GM10248 (cell line): ENCODE measurements at regions of chr6 and their contacts with region 1.

Region 1: GRCh38 chr6:34806738-34807453 is 15.0 kb downstream of the BLTP3A start:
- DNase-seq: no peak
- CTCF ChIP-seq: no peak

Region 2: DNA sequence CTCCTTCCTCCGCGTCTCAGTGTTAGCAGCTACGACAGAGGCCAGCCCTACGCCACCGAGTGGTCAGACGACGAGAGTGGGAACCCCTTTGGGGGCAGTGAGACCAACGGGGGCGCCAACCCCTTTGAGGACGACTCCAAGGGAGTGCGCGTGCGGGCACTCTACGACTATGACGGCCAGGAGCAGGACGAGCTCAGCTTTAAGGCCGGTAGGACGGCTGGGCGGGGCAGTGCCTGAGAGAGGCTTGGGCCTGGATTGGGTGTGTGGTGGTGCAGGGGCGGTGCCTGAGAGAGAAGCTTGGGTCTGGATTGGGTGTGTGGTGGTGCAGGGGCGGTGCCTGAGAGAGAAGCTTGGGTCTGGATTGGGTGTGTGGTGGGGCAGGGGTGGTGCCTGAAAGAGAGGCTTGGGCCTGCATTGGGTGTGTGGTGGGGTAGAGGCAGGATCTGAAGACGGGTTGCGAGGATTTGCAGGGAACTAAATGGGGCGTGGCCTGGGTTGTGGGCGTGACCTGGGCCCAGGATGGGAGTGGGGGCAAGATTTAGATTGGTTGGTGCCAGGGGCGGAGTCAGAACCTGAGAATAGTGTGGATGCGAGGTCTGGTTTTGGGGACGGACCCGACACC is 275.2 kb before region 1 on chr6:
- CTCF ChIA-PET with region 1: no interaction called
- POLR2A ChIA-PET with region 1: no interaction called
- DNase-seq: peak; percentile 56
- CTCF ChIP-seq: no peak

Region 3: DNA sequence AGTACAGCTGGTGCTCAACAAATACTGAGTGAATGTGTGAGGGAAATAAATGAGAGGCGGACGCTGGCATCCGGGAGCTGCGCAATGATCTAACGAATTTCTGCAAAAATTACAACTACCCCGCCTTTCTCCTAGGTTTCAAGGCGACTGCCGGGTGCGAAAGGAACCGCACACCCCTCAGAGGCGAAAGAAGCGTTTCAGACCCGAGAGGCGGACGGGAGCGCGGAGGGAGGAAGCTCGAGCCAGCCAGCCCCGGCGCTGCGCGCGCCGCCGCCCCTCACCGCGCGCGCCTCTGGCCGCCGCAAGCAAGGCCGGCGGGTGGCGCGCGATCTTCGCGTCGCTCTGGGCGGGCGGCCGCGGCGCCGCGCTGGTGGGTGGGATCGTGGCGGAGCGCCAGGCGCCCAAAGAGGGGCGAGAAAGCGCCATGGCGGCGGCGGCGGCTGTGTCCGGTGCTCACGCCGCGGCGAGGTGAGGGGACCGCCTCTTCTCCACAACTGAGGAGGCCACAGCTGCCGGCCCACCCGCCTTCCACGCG is 15.1 kb before region 1 on chr6 and contains the start of gene BLTP3A:
- CTCF ChIA-PET with region 1: interaction called, 28 read pairs
- POLR2A ChIA-PET with region 1: interaction called, 3 read pairs
- DNase-seq: peak; percentile 94
- CTCF ChIP-seq: peak; percentile 46